ENCODE measurements at regions of chr17 and their contacts with region 1.

Region 1: DNA sequence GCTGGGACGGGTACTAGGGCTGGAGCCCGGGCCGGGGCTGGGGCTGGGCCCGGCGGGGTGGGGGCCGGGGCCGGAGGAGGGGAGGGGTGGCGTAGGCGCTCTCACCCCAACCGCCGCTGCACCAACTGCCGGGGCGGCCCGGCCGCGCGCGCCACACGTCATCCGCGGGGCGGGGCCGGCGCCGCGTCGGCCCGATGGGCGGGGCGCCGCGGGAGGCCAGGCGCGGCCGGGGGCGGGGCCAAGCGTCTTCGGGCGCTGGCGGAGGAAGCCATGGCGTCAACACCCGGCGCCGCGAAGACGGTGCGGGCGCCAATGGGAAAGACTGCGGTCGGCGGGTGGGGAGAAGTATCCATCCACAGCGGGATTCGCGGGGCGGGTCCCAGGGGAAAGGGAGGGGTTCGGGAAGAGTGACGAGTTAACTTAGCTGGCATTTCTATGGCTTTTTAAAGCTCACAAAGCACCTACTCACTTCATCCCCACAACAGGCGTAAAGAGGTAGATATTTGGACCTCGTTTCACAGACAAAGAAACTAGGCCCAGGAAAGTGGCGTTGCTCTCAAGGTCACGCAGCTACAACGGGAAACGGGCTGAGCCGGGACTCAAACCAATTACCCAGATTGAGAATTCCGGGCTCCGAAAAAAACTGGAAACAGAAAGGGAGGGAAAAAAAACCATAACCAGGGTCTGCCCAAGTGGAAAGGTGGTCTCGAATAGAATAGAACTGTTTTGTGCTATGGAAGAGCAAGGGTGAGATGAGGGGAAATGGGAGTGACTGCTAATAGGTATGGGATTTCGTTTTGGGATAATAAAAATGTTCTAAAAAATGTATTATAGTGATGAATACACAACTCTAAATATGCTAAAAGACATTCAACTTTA is at the start of gene SPAG9:
- DNase-seq: peak; percentile 97
- H3K4me3 ChIP-seq: peak within 1 kb of the TSS; percentile 66 to 100 (median 67)
- H3K27ac ChIP-seq: peak within 1 kb of the TSS; percentile 100
- H3K4me1 ChIP-seq: peaks cover 30% of the 10 kb centered on the region
- H3K27me3 ChIP-seq: no peaks in the 10 kb centered on the region
- CTCF ChIP-seq: no peak
- total RNA-seq, gene SPAG9: 80.4 to 95.3 TPM

Region 2: GRCh38 chr17:51087072-51087757 is 33.8 kb before region 1 on chr17:
- CTCF ChIA-PET with region 1: no interaction called
- dilution Hi-C with region 1: no loop called
- in situ Hi-C with region 1: no loop called
- intact Hi-C with region 1: loop called (anchors 2 kb)
- DNase-seq: peak; percentile 52
- H3K4me3 ChIP-seq: no peak overlapping the region
- H3K27ac ChIP-seq: no peak overlapping the region
- H3K4me1 ChIP-seq: peaks cover 17% of the 10 kb centered on the region
- H3K27me3 ChIP-seq: no peaks in the 10 kb centered on the region
- CTCF ChIP-seq: no peak

Region 3: GRCh38 chr17:51133365-51133764 is 12.4 kb after region 1 on chr17:
- CTCF ChIA-PET with region 1: no interaction called
- dilution Hi-C with region 1: no loop called
- in situ Hi-C with region 1: no loop called
- intact Hi-C with region 1: no loop called
- DNase-seq: no peak
- H3K4me3 ChIP-seq: no peak overlapping the region
- H3K27ac ChIP-seq: no peak overlapping the region
- H3K4me1 ChIP-seq: peaks cover under 1% of the 10 kb centered on the region
- H3K27me3 ChIP-seq: no peaks in the 10 kb centered on the region
- CTCF ChIP-seq: no peak

Measured in mammary epithelial cell (primary cell).